ENCODE measurements at regions of chr7 and their contacts with region 1.

Region 1: DNA sequence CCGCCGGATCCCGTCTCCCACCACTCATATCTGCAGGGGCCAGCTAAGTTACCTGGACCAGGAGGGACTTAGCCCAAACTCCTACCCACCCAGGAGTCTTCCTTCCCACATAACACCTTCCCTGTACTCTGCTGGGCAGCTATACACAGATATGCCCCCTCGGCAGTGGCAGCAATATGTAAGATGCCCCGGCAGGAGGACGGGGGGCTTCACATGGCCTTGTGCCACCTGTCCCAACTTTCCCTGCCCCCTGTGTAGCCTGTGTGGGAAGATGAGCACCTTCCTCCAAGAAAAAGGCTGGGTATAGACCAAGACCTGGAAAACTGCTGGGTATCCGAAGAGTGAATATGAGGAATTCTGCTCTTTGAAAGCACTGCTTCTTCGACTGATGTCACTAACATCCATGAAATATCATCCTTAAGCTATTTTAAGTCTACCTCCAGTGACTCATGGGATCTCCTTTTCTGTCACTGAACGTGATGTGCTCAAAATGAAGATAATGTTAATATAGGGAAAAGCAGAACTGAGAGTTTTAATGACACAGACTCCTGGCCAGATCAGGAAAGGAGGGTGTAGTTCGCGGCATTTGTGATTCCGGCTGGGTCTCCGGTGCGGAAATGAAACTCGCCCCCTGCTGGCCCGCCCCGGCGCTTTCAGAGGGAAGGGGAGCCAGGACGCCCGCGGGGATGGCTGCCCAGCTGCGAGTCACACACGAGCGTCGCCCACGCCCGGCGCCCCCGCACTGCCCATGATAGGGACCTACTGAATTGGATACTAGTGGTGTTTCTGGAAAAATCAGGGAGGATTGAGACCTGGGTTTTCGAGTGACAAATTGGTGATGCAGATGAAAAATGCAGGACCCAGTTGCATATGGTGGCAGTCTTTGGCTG is 256.9 kb upstream of the NFE2L3 start:
- DNase-seq: peak; percentile 44 to 60 (median 51)
- H3K4me3 ChIP-seq: no peak overlapping the region
- H3K4me3 Mint-ChIP-seq: peak overlapping the region; percentile 50 to 94 (median 56)
- H3K27ac ChIP-seq: no peak overlapping the region
- H3K27ac Mint-ChIP-seq: peak overlapping the region in 4 of 7 donors; percentile 9 to 77 (median 43)
- H3K4me1 ChIP-seq: peaks cover 26% of the 10 kb centered on the region
- H3K4me1 Mint-ChIP-seq: peaks cover 16 to 24% (median 21%) of the 10 kb centered on the region in 4 donors
- H3K27me3 ChIP-seq: no peaks in the 10 kb centered on the region
- H3K27me3 Mint-ChIP-seq: peaks cover 0 to 3% of the 10 kb centered on the region in 2 donors

Region 2: DNA sequence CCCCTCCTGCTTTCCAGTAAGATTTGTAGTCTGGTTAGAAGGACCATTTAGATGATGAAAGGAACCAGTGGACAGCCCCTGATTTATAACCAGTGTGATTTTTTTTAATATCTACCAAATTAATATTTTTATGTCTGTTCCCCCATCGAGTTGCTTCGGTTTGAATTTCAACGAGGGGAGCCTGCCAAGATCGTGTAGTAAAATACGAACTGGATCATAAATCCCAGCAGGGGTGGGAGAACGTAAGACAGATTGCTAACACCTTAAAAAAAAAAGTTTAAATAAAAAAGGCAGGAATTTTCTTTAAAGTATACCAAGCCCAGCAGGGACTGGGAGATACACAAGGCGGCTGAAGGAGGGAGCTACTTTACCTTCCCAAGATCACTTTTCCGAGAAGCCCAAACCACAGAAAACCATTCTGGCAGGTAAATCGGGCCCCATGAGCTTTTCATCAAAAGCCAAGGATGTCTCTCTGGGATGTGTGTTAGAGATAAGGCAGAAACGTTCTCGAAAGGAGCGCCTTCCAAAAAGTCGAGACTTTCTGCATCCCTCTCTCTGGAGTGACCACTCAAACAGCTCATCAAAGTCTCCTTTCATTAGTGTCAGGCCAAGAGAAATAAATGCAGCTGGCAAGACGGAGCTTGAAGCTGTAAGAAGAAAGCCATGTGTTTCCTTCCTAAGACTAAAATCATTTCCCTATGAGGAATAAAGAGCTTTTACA is 13.7 kb before region 1 on chr7:
- CTCF ChIA-PET with region 1: interaction called, 27 read pairs
- POLR2A ChIA-PET with region 1: interaction called, 3 read pairs
- intact Hi-C with region 1: no loop called
- DNase-seq: no peak
- H3K4me3 ChIP-seq: no peak overlapping the region
- H3K4me3 Mint-ChIP-seq: no peak overlapping the region
- H3K27ac ChIP-seq: no peak overlapping the region
- H3K27ac Mint-ChIP-seq: no peak overlapping the region
- H3K4me1 ChIP-seq: no peaks in the 10 kb centered on the region
- H3K4me1 Mint-ChIP-seq: no peaks in the 10 kb centered on the region
- H3K27me3 ChIP-seq: no peaks in the 10 kb centered on the region
- H3K27me3 Mint-ChIP-seq: peaks cover 25 to 46% of the 10 kb centered on the region in 2 donors

Region 3: DNA sequence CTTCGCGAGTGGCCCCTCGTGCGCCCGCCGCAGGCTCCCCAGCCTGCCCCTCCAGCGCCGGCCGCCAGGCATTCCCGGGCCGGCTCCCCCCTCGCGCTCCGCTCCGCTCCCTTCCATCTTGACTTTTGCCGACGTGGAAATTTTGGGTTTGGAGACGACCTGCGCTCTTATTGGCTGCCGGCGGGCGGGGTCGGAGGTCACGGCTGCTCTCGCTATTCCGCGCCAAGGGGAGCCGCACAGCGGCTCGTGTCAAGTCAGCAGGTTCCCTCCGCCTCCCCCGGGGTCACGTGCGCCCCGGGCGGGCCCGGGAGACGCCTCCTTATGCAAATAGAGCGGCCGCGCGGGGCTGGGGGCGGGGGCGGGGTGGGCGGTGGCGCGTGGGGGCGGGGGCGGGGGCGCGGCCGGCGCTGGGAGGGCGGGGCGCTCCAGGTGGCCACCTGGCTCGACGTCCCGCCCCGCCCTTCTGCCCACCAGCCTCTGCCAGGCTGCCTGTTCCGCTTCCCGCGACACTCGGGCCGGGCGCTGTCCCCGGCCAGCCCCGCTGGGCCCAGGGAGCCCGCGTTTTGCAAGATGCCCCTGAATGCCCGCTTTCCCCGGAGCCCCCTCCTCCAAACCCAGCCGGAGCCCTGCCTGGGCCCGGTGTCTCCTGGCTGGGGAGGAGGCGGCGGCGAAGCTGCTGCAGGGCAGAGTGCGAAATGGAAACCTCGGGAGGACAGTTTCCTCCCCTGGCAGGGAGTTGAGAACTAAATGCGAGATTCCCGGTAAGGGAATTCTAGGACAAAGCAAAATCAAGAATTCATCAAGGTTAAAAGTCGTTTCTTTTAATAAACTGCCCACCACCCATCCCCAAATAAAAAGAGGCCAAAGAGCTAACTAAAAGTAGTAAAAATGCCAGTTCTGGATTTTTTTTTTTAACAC is 56.1 kb after region 1 on chr7:
- CTCF ChIA-PET with region 1: interaction called, 3 read pairs
- POLR2A ChIA-PET with region 1: interaction called, 3 read pairs
- intact Hi-C with region 1: loop called (anchors 2 kb)
- DNase-seq: peak; percentile 84 to 94 (median 88)
- H3K4me3 ChIP-seq: peak overlapping the region in 1 of 2 donors; percentile 69
- H3K4me3 Mint-ChIP-seq: peak overlapping the region; percentile 91 to 93 (median 92)
- H3K27ac ChIP-seq: peak overlapping the region; percentile 25
- H3K27ac Mint-ChIP-seq: peak overlapping the region; percentile 69 to 89 (median 84)
- H3K4me1 ChIP-seq: peaks cover 14% of the 10 kb centered on the region
- H3K4me1 Mint-ChIP-seq: peaks cover 6 to 27% (median 17%) of the 10 kb centered on the region in 4 donors
- H3K27me3 ChIP-seq: no peaks in the 10 kb centered on the region
- H3K27me3 Mint-ChIP-seq: no peaks in the 10 kb centered on the region

Region 4: GRCh38 chr7:26078437-26079336 is 183.5 kb after region 1 on chr7:
- CTCF ChIA-PET with region 1: interaction called, 11 read pairs
- POLR2A ChIA-PET with region 1: no interaction called
- intact Hi-C with region 1: loop called (anchors 5 kb)
- DNase-seq: peak; percentile 73 to 82 (median 75)
- H3K4me3 ChIP-seq: no peak overlapping the region
- H3K4me3 Mint-ChIP-seq: peak overlapping the region in 5 of 8 donors; percentile 21 to 65 (median 46)
- H3K27ac ChIP-seq: no peak overlapping the region
- H3K27ac Mint-ChIP-seq: no peak overlapping the region
- H3K4me1 ChIP-seq: peaks cover 8% of the 10 kb centered on the region
- H3K4me1 Mint-ChIP-seq: peaks cover 0 to 10% (median under 1%) of the 10 kb centered on the region in 4 donors
- H3K27me3 ChIP-seq: peaks cover 15% of the 10 kb centered on the region
- H3K27me3 Mint-ChIP-seq: peaks cover 20 to 46% of the 10 kb centered on the region in 2 donors

Region 5: GRCh38 chr7:26356929-26357798 is 462.0 kb after region 1 on chr7:
- CTCF ChIA-PET with region 1: interaction called, 15 read pairs
- POLR2A ChIA-PET with region 1: interaction called, 4 read pairs
- intact Hi-C with region 1: no loop called
- DNase-seq: no peak
- H3K4me3 ChIP-seq: no peak overlapping the region
- H3K4me3 Mint-ChIP-seq: peak overlapping the region in 1 of 8 donors; percentile 50
- H3K27ac ChIP-seq: no peak overlapping the region
- H3K27ac Mint-ChIP-seq: peak overlapping the region in 1 of 7 donors; percentile 14
- H3K4me1 ChIP-seq: no peaks in the 10 kb centered on the region
- H3K4me1 Mint-ChIP-seq: no peaks in the 10 kb centered on the region
- H3K27me3 ChIP-seq: no peaks in the 10 kb centered on the region
- H3K27me3 Mint-ChIP-seq: no peaks in the 10 kb centered on the region

Region 6: DNA sequence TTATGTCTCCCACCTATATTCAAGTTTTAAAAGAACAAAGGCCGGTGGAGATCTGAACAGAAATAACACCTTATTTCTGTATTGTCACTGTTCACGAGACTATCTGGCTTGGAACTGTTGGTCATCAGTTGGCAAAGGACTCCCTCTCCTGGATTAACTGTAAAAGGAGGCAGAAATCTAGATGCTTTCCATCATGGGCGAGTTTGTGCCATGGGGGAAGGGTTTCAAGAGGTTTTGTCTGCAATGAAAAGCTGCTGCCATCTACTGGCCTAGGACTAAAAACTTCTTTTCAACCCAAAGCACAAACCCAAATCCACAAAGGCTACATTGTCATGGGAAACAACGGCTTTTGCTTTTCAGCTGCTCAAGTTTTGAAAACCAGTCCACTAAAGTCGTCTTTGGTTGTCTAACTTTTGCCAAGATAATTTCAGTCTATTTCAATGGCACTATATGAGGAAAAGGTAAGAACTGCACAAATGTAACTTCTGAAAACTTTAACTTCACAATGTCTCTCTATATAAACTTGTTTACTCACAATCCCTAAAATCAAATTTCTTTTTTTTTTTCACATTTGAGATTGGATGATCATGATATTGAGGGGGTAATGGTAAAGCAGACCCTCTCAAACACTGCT is 772.5 kb after region 1 on chr7:
- CTCF ChIA-PET with region 1: interaction called, 11 read pairs
- POLR2A ChIA-PET with region 1: no interaction called
- intact Hi-C with region 1: loop called (anchors 1 kb)
- DNase-seq: peak; percentile 58 to 67 (median 59)
- H3K4me3 ChIP-seq: no peak overlapping the region
- H3K4me3 Mint-ChIP-seq: no peak overlapping the region
- H3K27ac ChIP-seq: no peak overlapping the region
- H3K27ac Mint-ChIP-seq: no peak overlapping the region
- H3K4me1 ChIP-seq: peaks cover 16% of the 10 kb centered on the region
- H3K4me1 Mint-ChIP-seq: peaks cover 9 to 19% (median 13%) of the 10 kb centered on the region in 4 donors
- H3K27me3 ChIP-seq: no peaks in the 10 kb centered on the region
- H3K27me3 Mint-ChIP-seq: peaks cover 2 to 3% of the 10 kb centered on the region in 2 donors

Measured in CD4-positive, alpha-beta memory T cell (primary cell).